ENCODE measurements at regions of chr6 and their contacts with region 1.

Region 1: GRCh38 chr6:39361657-39362486 is 39.4 kb upstream of the KCNK16 start:
- DNase-seq: peak; percentile 44
- H3K4me3 ChIP-seq: no peak overlapping the region
- H3K27ac ChIP-seq: no peak overlapping the region
- H3K4me1 ChIP-seq: no peaks in the 10 kb centered on the region
- H3K27me3 ChIP-seq: no peaks in the 10 kb centered on the region
- CTCF ChIP-seq: peak; percentile 81 to 90

Region 2: GRCh38 chr6:39086294-39086693 is 275.6 kb before region 1 on chr6:
- CTCF ChIA-PET with region 1: no interaction called
- dilution Hi-C with region 1: no loop called
- in situ Hi-C with region 1: no loop called
- intact Hi-C with region 1: no loop called
- DNase-seq: no peak
- H3K4me3 ChIP-seq: no peak overlapping the region
- H3K27ac ChIP-seq: no peak overlapping the region
- H3K4me1 ChIP-seq: no peaks in the 10 kb centered on the region
- H3K27me3 ChIP-seq: no peaks in the 10 kb centered on the region
- CTCF ChIP-seq: no peak

Region 3: DNA sequence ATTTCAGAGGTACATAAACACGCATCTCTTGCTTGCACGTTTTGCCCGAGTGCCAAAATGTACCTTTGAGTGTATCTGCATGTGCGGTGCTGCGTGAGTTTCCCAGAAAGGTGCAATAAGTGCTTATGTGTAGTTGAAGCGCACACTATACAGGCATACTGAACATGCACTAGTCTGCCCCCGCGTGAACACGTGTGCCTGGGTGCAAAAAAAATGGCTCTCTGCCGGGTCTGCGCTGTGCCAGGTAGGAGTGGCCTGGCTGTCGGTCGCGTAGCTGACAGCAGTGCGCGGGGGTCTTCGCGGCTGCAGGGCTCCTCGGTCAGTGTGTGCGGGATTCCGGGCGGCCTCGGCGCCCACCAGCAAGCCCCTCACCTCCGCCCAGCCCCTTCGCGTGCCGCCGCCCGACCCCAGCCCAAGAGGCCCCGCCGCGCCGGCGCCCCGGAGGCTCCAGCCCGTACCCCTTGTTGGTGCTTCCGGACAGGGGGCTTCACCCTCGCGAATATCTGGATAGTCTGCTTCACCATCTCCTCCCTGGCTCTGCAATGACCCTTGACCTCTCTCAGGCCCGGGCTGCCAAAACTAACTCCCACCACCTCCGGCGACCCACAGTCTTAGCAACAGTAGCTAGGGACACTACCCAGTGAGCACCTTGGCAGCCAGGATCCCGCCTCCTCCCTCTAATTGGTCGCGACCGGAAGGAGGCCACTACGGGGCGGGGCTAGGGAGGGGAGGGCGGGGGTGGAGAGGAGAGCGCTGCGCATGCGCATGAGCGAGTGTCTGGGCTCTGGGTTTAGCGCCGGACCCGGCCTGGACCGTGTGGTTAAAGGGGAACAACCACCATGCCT is 363.1 kb after region 1 on chr6 and contains the start of gene KIF6:
- CTCF ChIA-PET with region 1: no interaction called
- dilution Hi-C with region 1: no loop called
- in situ Hi-C with region 1: no loop called
- intact Hi-C with region 1: loop called (anchors 10 kb)
- DNase-seq: peak; percentile 78
- H3K4me3 ChIP-seq: peak within 1 kb of the TSS; percentile 64 to 83 (median 70)
- H3K27ac ChIP-seq: peak within 1 kb of the TSS; percentile 43
- H3K4me1 ChIP-seq: peaks cover 5% of the 10 kb centered on the region
- H3K27me3 ChIP-seq: no peaks in the 10 kb centered on the region
- CTCF ChIP-seq: no peak
- total RNA-seq, gene KIF6: 0.33 to 0.66 TPM

Region 4: DNA sequence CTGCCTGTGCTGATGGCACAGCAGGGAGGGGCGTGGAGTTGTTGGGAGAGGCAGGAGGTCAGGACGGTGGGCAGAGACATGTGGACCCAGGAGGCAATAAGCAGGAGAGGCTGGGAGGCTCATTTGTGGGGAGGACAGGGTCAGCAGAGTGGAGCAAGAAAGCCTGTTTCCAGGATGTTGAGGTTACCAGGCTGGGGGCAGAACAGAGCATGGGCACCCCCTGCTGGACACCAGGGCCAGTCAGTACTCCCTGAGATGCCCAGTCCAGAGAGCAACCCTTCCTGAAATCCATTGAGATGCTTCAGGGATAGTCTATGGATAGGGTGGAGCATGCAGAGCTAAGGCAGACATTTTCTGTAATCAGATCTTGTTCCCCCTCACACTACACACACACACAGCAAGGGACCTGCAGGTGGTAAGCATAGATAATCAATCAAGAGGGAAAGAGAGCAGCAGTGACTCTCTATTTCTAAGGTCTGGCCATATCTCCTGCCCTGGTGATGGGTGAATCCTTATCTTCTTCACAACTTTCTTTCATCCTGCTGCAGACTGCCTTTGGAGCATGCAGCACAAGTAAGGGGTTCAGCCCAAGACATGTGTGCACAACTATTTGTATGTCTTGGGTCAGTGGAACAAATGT is 530.7 kb after region 1 on chr6:
- CTCF ChIA-PET with region 1: no interaction called
- dilution Hi-C with region 1: no loop called
- in situ Hi-C with region 1: no loop called
- intact Hi-C with region 1: loop called (anchors 1 kb)
- DNase-seq: peak; percentile 17
- H3K4me3 ChIP-seq: no peak overlapping the region
- H3K27ac ChIP-seq: no peak overlapping the region
- H3K4me1 ChIP-seq: no peaks in the 10 kb centered on the region
- H3K27me3 ChIP-seq: peaks cover 4% of the 10 kb centered on the region
- CTCF ChIP-seq: peak; percentile 69 to 81

Region 5: DNA sequence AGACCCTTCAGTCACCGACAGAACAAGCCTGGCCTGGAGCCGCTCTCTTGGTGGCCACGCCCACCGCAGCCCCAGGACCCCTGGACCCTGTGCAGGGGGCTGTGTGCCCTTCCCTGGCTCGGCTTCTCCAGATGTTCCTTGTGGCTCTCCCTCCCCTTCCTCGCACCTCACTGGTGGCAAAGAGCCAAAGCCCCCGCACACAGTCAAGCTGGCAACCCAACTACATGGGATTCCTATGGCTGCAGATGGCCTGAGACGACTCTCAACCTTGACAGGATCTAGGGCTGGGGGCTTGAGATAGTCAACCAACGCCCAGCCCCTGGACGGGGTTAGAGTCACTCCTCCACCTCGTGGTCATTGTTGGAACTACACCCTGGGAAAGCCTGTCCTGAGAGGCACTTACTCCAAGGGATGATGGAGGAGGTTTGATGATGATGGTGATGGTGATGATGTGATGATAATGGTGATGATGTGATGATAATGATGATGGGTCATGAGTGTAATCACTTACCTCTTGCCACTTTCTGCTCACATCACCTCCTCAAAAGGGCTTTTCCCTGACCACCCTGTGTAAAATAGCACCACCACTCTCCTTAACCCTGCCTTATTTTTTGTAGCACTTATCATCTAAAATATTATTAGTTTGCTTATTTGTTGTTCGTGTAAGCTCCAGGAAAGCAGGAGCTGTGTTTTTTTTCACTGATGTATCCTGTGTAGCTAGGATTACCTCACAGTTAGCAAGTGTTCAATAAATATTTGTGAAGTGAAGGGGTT is 946.8 kb after region 1 on chr6:
- CTCF ChIA-PET with region 1: no interaction called
- dilution Hi-C with region 1: no loop called
- in situ Hi-C with region 1: loop called in 1 of 2 experiments (anchors 25 kb)
- intact Hi-C with region 1: no loop called
- DNase-seq: peak; percentile 45
- H3K4me3 ChIP-seq: no peak overlapping the region
- H3K27ac ChIP-seq: no peak overlapping the region
- H3K4me1 ChIP-seq: peaks cover 3% of the 10 kb centered on the region
- H3K27me3 ChIP-seq: no peaks in the 10 kb centered on the region
- CTCF ChIP-seq: peak; percentile 86 to 95

Measured in mammary epithelial cell (primary cell).